ENCODE measurements at regions of chr2 and their contacts with region 1.

Region 1: DNA sequence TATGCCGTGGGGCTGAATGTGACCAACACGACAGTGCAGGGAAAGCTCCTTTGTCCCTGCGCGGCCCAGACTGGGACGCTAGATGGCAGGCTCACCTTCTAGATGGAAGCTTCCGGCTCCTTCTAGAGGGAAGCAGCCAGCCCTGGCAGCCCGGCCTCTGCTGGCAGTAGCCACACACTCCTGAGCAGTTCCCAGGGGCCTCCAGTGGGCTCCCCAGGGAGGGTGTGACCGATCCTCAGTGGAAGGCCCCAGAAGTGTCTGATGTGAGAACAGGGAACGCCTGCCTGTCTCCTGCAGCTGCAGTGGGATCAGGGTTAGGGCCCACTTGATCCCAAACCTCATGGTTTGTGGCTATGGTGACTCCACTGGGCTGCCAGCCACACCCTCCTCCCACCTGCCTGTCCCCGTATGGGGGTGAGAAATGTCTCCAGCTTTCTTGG is 48.5 kb upstream of the LRPPRC start:
- DNase-seq: peak; percentile 91
- H3K4me3 ChIP-seq: no peak overlapping the region
- H3K4me3 Mint-ChIP-seq: no peak overlapping the region
- H3K27ac Mint-ChIP-seq: no peak overlapping the region
- H3K4me1 ChIP-seq: no peaks in the 10 kb centered on the region
- H3K4me1 Mint-ChIP-seq: no peaks in the 10 kb centered on the region
- H3K27me3 ChIP-seq: no peaks in the 10 kb centered on the region
- H3K27me3 Mint-ChIP-seq: no peaks in the 10 kb centered on the region
- CTCF ChIP-seq: peak; percentile 95 to 98

Region 2: GRCh38 chr2:44087036-44087713 is 42.9 kb after region 1 on chr2:
- CTCF ChIA-PET with region 1: interaction called, 8 read pairs
- POLR2A ChIA-PET with region 1: no interaction called
- intact Hi-C with region 1: loop called (anchors 2 kb)
- DNase-seq: peak; percentile 83 to 93
- H3K4me3 ChIP-seq: peak overlapping the region; percentile 32
- H3K4me3 Mint-ChIP-seq: peak overlapping the region; percentile 73
- H3K27ac Mint-ChIP-seq: peak overlapping the region; percentile 80
- H3K4me1 ChIP-seq: peaks cover 30% of the 10 kb centered on the region
- H3K4me1 Mint-ChIP-seq: peaks cover 49% of the 10 kb centered on the region
- H3K27me3 ChIP-seq: no peaks in the 10 kb centered on the region
- H3K27me3 Mint-ChIP-seq: no peaks in the 10 kb centered on the region
- CTCF ChIP-seq: peak; percentile 94 to 96

Region 3: GRCh38 chr2:44291281-44292248 is 247.3 kb after region 1 on chr2:
- CTCF ChIA-PET with region 1: interaction called, 31 read pairs
- POLR2A ChIA-PET with region 1: no interaction called
- intact Hi-C with region 1: loop called (anchors 1 kb)
- DNase-seq: peak; percentile 92 to 97
- H3K4me3 ChIP-seq: 0 out of 2 replicates have a peak overlapping the region, but pooled peaks have one; percentile 5
- H3K4me3 Mint-ChIP-seq: peak overlapping the region; percentile 55
- H3K27ac Mint-ChIP-seq: peak overlapping the region; percentile 62
- H3K4me1 ChIP-seq: peaks cover 52% of the 10 kb centered on the region
- H3K4me1 Mint-ChIP-seq: peaks cover 45% of the 10 kb centered on the region
- H3K27me3 ChIP-seq: no peaks in the 10 kb centered on the region
- H3K27me3 Mint-ChIP-seq: no peaks in the 10 kb centered on the region
- CTCF ChIP-seq: peak; percentile 78 to 87

Region 4: DNA sequence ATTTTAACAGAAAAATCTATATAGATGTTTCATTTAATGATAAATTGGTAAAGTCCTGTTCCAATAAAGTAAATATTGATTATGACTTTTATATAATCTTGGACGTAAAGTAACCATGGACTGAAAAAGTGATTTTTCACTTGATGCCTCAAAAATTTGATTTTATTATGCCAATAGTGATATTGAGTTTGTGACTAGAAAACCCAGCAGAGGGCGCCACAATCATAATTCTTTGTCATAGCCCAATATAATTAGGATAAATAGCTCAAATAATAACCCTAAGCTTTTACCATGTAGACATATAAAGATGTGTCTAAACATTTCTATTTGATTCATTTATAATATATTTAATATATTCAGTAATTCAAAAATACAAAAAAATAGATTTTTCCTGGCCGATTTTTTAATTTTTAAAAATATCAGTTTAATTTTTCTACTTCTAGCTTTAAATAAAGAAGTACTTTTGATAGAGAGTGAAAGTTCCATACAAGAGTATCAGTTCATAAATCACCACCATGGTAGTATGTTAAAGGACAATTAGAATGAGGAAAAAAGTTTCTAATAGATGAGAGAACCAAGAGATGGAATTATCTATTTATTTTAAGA is 348.1 kb after region 1 on chr2:
- CTCF ChIA-PET with region 1: interaction called, 6 read pairs
- POLR2A ChIA-PET with region 1: no interaction called
- intact Hi-C with region 1: loop called (anchors 2 kb)
- DNase-seq: peak; percentile 55 to 62
- H3K4me3 ChIP-seq: no peak overlapping the region
- H3K4me3 Mint-ChIP-seq: no peak overlapping the region
- H3K27ac Mint-ChIP-seq: no peak overlapping the region
- H3K4me1 ChIP-seq: no peaks in the 10 kb centered on the region
- H3K4me1 Mint-ChIP-seq: peaks cover 7% of the 10 kb centered on the region
- H3K27me3 ChIP-seq: no peaks in the 10 kb centered on the region
- H3K27me3 Mint-ChIP-seq: no peaks in the 10 kb centered on the region
- CTCF ChIP-seq: peak; percentile 59 to 79

Region 5: GRCh38 chr2:44955593-44956392 is 911.5 kb after region 1 on chr2:
- CTCF ChIA-PET with region 1: interaction called, 6 read pairs
- POLR2A ChIA-PET with region 1: no interaction called
- intact Hi-C with region 1: loop called (anchors 5 kb)
- DNase-seq: peak; percentile 75 to 88
- H3K4me3 ChIP-seq: peak overlapping the region; percentile 32
- H3K4me3 Mint-ChIP-seq: peak overlapping the region; percentile 73
- H3K27ac Mint-ChIP-seq: no peak overlapping the region
- H3K4me1 ChIP-seq: no peaks in the 10 kb centered on the region
- H3K4me1 Mint-ChIP-seq: peaks cover 5% of the 10 kb centered on the region
- H3K27me3 ChIP-seq: no peaks in the 10 kb centered on the region; the same call in 1 of the 2 replicates
- H3K27me3 Mint-ChIP-seq: peaks cover 5% of the 10 kb centered on the region
- CTCF ChIP-seq: peak; percentile 89 to 90

Measured in Caco-2 (cell line).